OCI-LY7 (cell line): ENCODE measurements at regions of chr11 and their contacts with region 1.

Region 1: GRCh38 chr11:34149786-34150185 is 44.4 kb downstream of the NAT10 start:
- DNase-seq: no peak
- H3K4me3 ChIP-seq: no peak overlapping the region
- H3K27ac ChIP-seq: no peak overlapping the region
- H3K4me1 ChIP-seq: peaks cover 51% of the 10 kb centered on the region
- CTCF ChIP-seq: peak; percentile 52

Region 2: DNA sequence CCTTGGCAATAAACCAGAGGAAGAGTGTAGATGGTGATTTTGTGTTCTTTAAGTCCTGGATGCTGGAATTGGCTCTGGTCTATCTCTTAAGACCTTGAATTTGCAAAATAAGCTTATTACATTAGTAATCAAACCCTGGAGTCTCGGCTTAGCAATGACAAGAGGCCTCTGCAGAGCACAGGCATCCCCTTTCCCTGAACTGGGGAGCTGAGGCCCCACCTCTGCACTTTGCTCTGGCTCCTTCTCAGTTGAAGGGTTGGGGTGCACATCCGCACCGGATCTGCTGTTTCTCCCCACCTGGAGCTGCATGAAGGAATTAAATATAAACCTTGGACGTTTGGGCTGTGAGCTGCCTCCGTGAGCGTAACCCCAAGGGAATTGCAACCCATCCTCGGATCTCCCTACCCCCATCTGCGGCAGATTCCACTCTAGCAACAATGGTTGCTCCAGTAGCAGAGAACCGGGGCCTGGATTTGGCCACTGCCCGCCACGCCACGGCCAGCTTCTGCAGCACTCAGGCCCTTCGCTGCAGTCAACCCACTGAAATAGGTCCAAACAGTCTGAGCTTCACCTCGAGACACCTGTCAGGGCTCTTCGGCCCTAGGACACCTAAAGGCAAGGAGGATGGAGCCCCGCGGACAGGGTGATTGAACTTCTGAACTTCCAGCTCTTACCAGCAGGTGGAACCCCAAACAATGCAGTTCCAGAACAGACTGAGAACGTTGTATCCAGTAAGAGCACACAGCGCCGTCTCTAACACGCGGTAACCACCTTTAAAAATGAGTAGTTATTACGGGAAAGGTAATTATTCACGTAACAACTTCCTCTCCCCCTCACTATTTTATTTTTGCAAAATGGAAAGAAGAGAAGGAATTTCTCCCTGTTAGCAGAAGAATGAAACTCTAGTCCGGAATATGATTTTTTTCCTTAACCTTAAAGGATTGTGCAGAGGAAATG is 153.0 kb before region 1 on chr11:
- CTCF ChIA-PET with region 1: no interaction called
- POLR2A ChIA-PET with region 1: no interaction called
- intact Hi-C with region 1: loop called (anchors 5 kb)
- DNase-seq: peak; percentile 82
- H3K4me3 ChIP-seq: no peak overlapping the region
- H3K27ac ChIP-seq: no peak overlapping the region
- H3K4me1 ChIP-seq: peaks cover 9% of the 10 kb centered on the region
- CTCF ChIP-seq: peak; percentile 90